PC-3 (cell line): ENCODE measurements at regions of chr6 and their contacts with region 1.

Region 1: DNA sequence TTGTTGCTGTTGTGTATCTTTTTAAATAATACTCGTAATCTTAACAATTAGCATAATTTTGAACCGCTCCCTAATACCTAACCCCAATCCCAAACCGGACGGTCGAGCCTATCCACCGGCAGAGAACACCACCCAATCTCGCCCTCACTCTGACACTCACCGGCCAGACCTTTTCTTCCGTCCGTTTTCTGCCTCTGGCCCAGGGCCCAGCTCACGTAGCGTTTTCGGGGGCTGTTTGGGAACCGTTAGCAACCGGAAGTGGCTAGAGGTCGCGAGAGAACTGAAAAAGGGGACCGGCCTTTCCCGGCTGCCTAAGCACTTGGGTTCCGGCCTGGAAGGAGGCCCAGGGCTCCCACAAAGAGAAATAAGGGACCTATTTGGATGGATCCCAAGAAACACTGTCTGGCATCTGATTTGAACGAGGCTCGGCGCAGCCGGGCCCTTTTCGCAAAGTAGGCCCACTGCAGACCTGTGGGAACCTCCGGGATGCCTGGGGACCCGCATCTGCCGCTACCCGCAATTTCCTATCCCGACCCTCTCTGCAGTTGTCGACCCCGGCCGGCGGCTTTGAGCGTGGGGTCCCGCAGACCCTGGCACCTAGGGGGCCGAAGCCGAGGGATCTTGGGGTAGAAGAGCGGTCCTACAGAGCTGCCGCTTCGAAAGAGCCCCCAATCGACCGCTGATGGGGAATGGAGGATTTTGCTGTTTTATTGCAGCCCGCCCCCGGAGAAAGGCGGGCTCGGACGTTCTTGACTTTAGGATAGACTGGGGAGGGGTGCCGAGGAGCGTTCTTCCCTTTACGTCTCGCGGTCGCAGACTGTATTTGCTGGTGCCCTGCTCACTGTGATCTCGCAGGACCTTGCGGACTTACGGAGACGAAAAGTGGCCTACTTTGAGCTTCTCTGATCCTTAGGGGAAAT is 4.8 kb upstream of the ZKSCAN8 start:
- DNase-seq: peak; percentile 90
- ATAC-seq: peak; percentile 59
- H3K4me3 ChIP-seq: peak overlapping the region; percentile 91
- H3K27ac ChIP-seq: peak overlapping the region; percentile 52
- H3K4me1 ChIP-seq: peaks cover 14% of the 10 kb centered on the region
- H3K27me3 ChIP-seq: no peaks in the 10 kb centered on the region
- CTCF ChIP-seq: no peak

Region 2: GRCh38 chr6:28104392-28105244 is 32.2 kb before region 1 on chr6:
- CTCF ChIA-PET with region 1: no interaction called
- POLR2A ChIA-PET with region 1: interaction called, 4 read pairs
- intact Hi-C with region 1: loop called (anchors 2 kb)
- DNase-seq: peak; percentile 81
- ATAC-seq: peak; percentile 97
- H3K4me3 ChIP-seq: peak overlapping the region; percentile 77
- H3K27ac ChIP-seq: peak overlapping the region; percentile 4; the same call in 1 of the 2 replicates
- H3K4me1 ChIP-seq: peaks cover 10% of the 10 kb centered on the region; the same call in 1 of the 2 replicates
- H3K27me3 ChIP-seq: no peaks in the 10 kb centered on the region
- CTCF ChIP-seq: peak; percentile 57

Region 3: DNA sequence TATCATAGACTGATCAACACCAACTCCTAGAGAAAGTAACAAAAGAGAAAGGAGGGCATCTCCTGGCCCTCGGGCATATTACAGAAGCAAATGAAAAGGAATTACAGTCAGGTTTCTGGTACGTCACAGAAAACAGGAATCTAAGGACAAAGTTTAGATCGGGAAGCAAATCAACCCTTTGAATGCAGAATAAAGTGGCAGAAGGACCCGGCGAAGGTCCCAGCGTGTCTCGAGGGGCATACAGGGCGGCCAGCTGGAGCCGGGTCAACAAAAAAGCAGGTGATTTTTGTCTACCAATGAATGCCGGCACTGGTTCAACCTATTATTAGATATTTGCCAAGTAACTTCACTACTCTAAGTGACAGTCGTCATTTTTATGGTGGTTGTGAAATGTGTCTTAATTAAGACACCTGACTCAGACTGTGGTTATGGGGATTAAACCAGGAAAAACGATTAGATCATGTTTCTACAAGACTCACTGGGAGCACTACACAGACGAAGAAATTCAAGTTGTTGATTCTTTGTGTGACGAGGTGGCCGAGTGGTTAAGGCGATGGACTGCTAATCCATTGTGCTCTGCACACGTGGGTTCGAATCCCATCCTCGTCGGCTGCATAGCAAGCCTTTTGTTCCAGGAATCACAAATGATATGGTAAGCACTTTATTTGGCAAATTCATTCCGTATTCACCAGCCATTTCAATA is 75.8 kb after region 1 on chr6:
- CTCF ChIA-PET with region 1: no interaction called
- POLR2A ChIA-PET with region 1: interaction called, 13 read pairs
- intact Hi-C with region 1: loop called (anchors 2 kb)
- DNase-seq: peak; percentile 95
- ATAC-seq: peak; percentile 87
- H3K4me3 ChIP-seq: peak overlapping the region; percentile 84
- H3K27ac ChIP-seq: 0 out of 2 replicates have a peak overlapping the region, but pooled peaks have one; percentile 7
- H3K4me1 ChIP-seq: peaks cover 9% of the 10 kb centered on the region
- H3K27me3 ChIP-seq: no peaks in the 10 kb centered on the region
- CTCF ChIP-seq: peak; percentile 56

Region 4: GRCh38 chr6:28252009-28252975 is 115.4 kb after region 1 on chr6 and contains the start of gene ZKSCAN4:
- CTCF ChIA-PET with region 1: no interaction called
- POLR2A ChIA-PET with region 1: interaction called, 3 read pairs
- intact Hi-C with region 1: loop called (anchors 1 kb)
- DNase-seq: peak; percentile 93
- ATAC-seq: peak; percentile 89
- H3K4me3 ChIP-seq: peak within 1 kb of the TSS; percentile 93
- H3K27ac ChIP-seq: 0 out of 2 replicates have a peak within 1 kb of the TSS, but pooled peaks have one; percentile 4
- H3K4me1 ChIP-seq: peaks cover 12% of the 10 kb centered on the region
- H3K27me3 ChIP-seq: no peaks in the 10 kb centered on the region
- CTCF ChIP-seq: no peak
- total RNA-seq, gene ZKSCAN4: 2.3 and 3.7 TPM in 2 replicates

Region 5: GRCh38 chr6:28335564-28336283 is 198.9 kb after region 1 on chr6 and contains the start of gene ZSCAN31:
- CTCF ChIA-PET with region 1: no interaction called
- POLR2A ChIA-PET with region 1: no interaction called
- intact Hi-C with region 1: loop called (anchors 5 kb)
- DNase-seq: peak; percentile 97
- ATAC-seq: peak; percentile 85
- H3K4me3 ChIP-seq: peak within 1 kb of the TSS; percentile 75
- H3K27ac ChIP-seq: peak within 1 kb of the TSS; percentile 83
- H3K4me1 ChIP-seq: peaks cover 12% of the 10 kb centered on the region
- H3K27me3 ChIP-seq: no peaks in the 10 kb centered on the region
- CTCF ChIP-seq: no peak
- total RNA-seq, gene ZSCAN31: 10.7 and 16.9 TPM in 2 replicates

Region 6: GRCh38 chr6:28489366-28490204 is 352.7 kb after region 1 on chr6:
- CTCF ChIA-PET with region 1: no interaction called
- POLR2A ChIA-PET with region 1: interaction called, 22 read pairs
- intact Hi-C with region 1: no loop called
- DNase-seq: no peak
- ATAC-seq: no peak
- H3K4me3 ChIP-seq: no peak overlapping the region
- H3K27ac ChIP-seq: no peak overlapping the region
- H3K4me1 ChIP-seq: peaks cover 13% of the 10 kb centered on the region
- H3K27me3 ChIP-seq: no peaks in the 10 kb centered on the region
- CTCF ChIP-seq: no peak